ENCODE measurements at regions of chr12 and their contacts with region 1.

Region 1: GRCh38 chr12:2039034-2039433 is 13.8 kb upstream of the CACNA1C start:
- DNase-seq: no peak
- ATAC-seq: no peak
- H3K4me3 ChIP-seq: no peak overlapping the region
- H3K4me3 Mint-ChIP-seq: no peak overlapping the region
- H3K27ac ChIP-seq: no peak overlapping the region
- H3K27ac Mint-ChIP-seq: no peak overlapping the region
- H3K4me1 ChIP-seq: peaks cover 0 to 10% of the 10 kb centered on the region in 2 experiments
- H3K4me1 Mint-ChIP-seq: peaks cover 11 to 13% (median 12%) of the 10 kb centered on the region in 3 donors
- H3K27me3 ChIP-seq: peaks cover 0 to 19% of the 10 kb centered on the region in 2 experiments
- H3K27me3 Mint-ChIP-seq: peaks cover 41 to 43% of the 10 kb centered on the region in 2 donors

Region 2: GRCh38 chr12:1932264-1932777 is 106.7 kb before region 1 on chr12:
- CTCF ChIA-PET with region 1: no interaction called
- POLR2A ChIA-PET with region 1: no interaction called
- DNase-seq: peak in 1 of 35 experiments; percentile 21
- ATAC-seq: no peak
- H3K4me3 ChIP-seq: no peak overlapping the region
- H3K4me3 Mint-ChIP-seq: no peak overlapping the region
- H3K27ac ChIP-seq: no peak overlapping the region
- H3K27ac Mint-ChIP-seq: no peak overlapping the region
- H3K4me1 ChIP-seq: peaks cover 0 to 8% of the 10 kb centered on the region in 2 experiments
- H3K4me1 Mint-ChIP-seq: peaks cover 5 to 23% (median 21%) of the 10 kb centered on the region in 3 donors
- H3K27me3 ChIP-seq: peaks cover 0 to 16% of the 10 kb centered on the region in 2 experiments
- H3K27me3 Mint-ChIP-seq: no peaks in the 10 kb centered on the region

Region 3: GRCh38 chr12:2137711-2138693 is 99.0 kb after region 1 on chr12:
- CTCF ChIA-PET with region 1: no interaction called
- POLR2A ChIA-PET with region 1: no interaction called
- DNase-seq: no peak
- ATAC-seq: no peak
- H3K4me3 ChIP-seq: no peak overlapping the region
- H3K4me3 Mint-ChIP-seq: no peak overlapping the region
- H3K27ac ChIP-seq: no peak overlapping the region
- H3K27ac Mint-ChIP-seq: no peak overlapping the region
- H3K4me1 ChIP-seq: no peaks in the 10 kb centered on the region
- H3K4me1 Mint-ChIP-seq: no peaks in the 10 kb centered on the region
- H3K27me3 ChIP-seq: peaks cover 0 to 25% of the 10 kb centered on the region in 2 experiments
- H3K27me3 Mint-ChIP-seq: peaks cover 15 to 18% of the 10 kb centered on the region in 2 donors

Region 4: DNA sequence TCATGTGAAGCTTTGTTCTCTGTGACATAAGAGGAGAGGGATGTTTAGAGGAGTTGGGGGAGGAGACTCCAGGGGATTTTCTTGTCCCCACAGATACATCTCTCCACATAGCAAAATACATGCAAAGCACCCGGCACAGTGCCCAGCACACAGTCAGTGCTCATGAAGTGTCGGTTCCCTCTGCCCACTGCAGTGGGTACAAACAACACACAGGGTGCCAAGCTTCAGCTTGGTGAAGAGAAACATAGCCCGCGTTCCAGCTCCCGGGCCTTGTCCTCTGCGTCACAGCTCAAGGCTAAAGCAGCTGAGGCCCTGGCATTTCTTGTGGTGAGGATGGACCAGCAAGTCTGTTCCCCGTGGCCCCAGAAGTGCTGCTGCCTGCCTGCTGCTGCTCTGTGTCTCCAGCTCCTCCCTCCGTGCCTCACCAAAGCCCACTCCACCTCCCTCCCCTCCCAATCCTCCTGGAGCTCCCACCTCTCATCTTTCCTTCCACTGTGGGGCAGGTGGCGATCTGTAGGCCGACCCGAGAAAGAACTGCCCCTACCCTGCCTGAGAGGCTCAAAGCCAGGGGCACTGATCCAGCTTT is 698.7 kb after region 1 on chr12:
- CTCF ChIA-PET with region 1: interaction called in 1 of 2 experiments, 12 read pairs
- POLR2A ChIA-PET with region 1: no interaction called
- DNase-seq: no peak
- ATAC-seq: no peak
- H3K4me3 ChIP-seq: no peak overlapping the region
- H3K4me3 Mint-ChIP-seq: no peak overlapping the region
- H3K27ac ChIP-seq: no peak overlapping the region
- H3K27ac Mint-ChIP-seq: no peak overlapping the region
- H3K4me1 ChIP-seq: peaks cover 0 to under 1% of the 10 kb centered on the region in 2 experiments
- H3K4me1 Mint-ChIP-seq: peaks cover 2 to 12% (median 3%) of the 10 kb centered on the region in 3 donors
- H3K27me3 ChIP-seq: peaks cover 0 to 20% of the 10 kb centered on the region in 2 experiments
- H3K27me3 Mint-ChIP-seq: peaks cover 15 to 16% of the 10 kb centered on the region in 2 donors

Measured in T-cell (primary cell).